MCF 10A (cell line): ENCODE measurements at regions of chr15 and their contacts with region 1.

Region 1: DNA sequence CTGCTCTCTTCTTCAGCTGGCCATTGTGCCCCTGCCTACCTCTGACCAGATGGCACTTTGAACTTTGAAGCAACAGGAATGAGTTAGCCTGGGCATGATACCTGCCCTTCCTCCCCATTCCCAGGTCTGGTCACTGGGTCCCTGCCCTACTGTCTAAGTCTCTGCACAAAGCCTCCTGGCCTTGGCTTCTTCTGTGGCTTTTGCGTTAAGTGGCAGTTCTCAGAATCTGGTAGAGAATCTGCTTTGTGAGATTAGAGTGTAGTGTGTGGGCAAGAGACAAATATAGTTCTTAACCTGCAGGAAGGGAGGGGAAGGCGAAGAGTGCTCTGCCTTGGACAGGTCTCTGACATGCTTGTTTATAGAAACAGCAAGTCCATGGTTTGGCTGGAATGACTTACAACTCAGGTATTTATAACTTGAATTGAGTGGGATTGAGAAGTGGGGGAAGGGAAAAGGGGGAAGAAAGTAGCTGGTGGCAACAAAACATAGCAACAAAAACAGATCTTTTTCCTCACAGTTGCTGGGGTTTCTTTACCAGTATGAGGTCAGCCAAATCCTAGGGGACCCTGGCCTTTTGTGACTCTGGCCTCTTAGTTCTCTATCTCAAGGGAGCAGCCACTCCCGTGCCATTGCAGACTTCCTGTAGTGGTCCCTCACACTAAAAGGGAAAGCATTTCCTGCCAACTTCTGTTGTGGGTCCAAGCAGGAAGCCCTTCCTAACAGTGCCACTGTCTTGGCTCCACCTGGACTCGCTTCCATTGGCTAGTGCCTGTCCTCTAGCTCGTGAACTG is 16.7 kb downstream of the MAPKBP1 start:
- DNase-seq: peak; percentile 58
- H3K4me3 Mint-ChIP-seq: peak overlapping the region; percentile 24
- H3K27ac Mint-ChIP-seq: peak overlapping the region; percentile 86
- H3K4me1 Mint-ChIP-seq: peaks cover 51% of the 10 kb centered on the region
- H3K27me3 Mint-ChIP-seq: no peaks in the 10 kb centered on the region
- CTCF ChIP-seq: no peak

Region 2: DNA sequence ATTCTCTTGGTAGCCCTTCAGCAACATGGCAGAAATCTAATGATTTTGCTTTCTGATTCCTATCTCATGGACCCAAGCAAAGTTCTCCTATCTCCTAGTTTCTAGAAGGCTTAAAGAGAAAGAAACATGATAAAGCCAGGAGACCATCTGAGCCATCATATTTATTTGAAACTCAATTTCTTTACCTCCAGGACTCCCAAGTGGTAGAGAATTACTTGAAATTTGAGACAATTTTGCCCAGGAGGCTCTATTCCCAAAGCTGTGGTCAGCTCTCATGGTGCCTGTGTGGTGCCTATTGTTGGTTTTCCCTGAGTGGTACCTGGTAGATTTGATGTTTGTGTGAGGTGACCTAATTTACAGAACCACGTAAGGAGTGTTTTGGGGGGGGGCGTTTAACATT is 521.1 kb before region 1 on chr15:
- CTCF ChIA-PET with region 1: no interaction called
- POLR2A ChIA-PET with region 1: no interaction called
- intact Hi-C with region 1: no loop called
- DNase-seq: no peak
- H3K4me3 Mint-ChIP-seq: no peak overlapping the region
- H3K27ac Mint-ChIP-seq: no peak overlapping the region
- H3K4me1 Mint-ChIP-seq: no peaks in the 10 kb centered on the region
- H3K27me3 Mint-ChIP-seq: no peaks in the 10 kb centered on the region
- CTCF ChIP-seq: no peak

Region 3: GRCh38 chr15:41621200-41622193 is 169.5 kb before region 1 on chr15:
- CTCF ChIA-PET with region 1: no interaction called
- POLR2A ChIA-PET with region 1: no interaction called
- intact Hi-C with region 1: no loop called
- DNase-seq: peak; percentile 85
- H3K4me3 Mint-ChIP-seq: peak overlapping the region; percentile 82
- H3K27ac Mint-ChIP-seq: peak overlapping the region; percentile 97
- H3K4me1 Mint-ChIP-seq: no peaks in the 10 kb centered on the region
- H3K27me3 Mint-ChIP-seq: no peaks in the 10 kb centered on the region
- CTCF ChIP-seq: no peak

Region 4: DNA sequence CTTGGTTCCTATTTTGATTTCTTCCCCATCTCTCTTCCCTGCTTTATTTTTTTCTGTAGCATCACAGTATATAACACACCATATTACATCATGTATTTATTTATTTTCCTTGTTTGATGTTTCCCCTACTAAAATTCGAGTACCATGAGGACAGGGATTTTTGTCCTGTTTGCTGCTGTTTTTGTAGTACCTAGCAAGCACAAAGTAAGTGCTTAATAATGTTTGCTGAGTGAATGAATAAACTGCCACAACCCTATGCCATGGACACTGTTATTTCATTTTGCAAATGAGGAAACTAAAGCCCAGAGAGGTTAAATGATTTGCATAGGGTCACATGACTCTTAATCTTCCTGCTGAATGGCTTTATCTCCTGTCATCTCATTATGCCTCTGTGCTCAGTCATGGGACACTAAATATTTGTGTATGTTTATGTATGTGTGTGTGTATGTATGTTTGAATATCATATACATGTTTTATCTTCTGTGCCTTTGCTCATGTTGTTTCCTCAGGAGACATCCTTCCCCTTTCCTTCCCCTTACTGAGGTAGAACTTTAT is 156.8 kb before region 1 on chr15:
- CTCF ChIA-PET with region 1: no interaction called
- POLR2A ChIA-PET with region 1: no interaction called
- intact Hi-C with region 1: no loop called
- DNase-seq: no peak
- H3K4me3 Mint-ChIP-seq: no peak overlapping the region
- H3K27ac Mint-ChIP-seq: no peak overlapping the region
- H3K4me1 Mint-ChIP-seq: peaks cover 5% of the 10 kb centered on the region
- H3K27me3 Mint-ChIP-seq: no peaks in the 10 kb centered on the region
- CTCF ChIP-seq: no peak

Region 5: DNA sequence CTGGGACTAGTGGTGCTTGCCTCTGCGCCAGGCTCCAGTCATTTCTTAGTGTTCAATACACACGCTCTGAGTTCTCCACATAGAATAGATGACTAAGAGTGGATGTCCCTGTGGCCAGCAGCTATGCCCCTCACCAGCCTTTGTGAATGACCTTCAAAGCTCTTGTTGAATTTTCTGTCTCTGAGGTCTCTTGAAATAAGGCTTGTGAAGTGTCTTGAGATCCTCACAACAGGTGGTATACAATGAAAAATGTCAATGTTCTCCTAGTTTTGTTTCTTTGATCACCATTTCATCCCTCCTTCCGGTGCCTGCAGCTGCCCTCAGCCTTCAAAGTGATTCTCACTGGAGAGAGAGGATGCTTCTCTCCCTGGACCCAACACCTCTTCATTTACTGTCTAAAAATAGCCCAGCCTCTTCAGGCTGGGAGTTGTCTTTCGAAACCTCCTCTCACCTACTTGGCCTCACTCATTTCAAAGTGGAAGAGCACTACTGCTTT is 11.2 kb before region 1 on chr15:
- CTCF ChIA-PET with region 1: interaction called, 17 read pairs
- POLR2A ChIA-PET with region 1: interaction called, 193 read pairs
- intact Hi-C with region 1: no loop called
- DNase-seq: no peak
- H3K4me3 Mint-ChIP-seq: no peak overlapping the region
- H3K27ac Mint-ChIP-seq: peak overlapping the region; percentile 74
- H3K4me1 Mint-ChIP-seq: peaks cover 53% of the 10 kb centered on the region
- H3K27me3 Mint-ChIP-seq: no peaks in the 10 kb centered on the region
- CTCF ChIP-seq: no peak

Region 6: DNA sequence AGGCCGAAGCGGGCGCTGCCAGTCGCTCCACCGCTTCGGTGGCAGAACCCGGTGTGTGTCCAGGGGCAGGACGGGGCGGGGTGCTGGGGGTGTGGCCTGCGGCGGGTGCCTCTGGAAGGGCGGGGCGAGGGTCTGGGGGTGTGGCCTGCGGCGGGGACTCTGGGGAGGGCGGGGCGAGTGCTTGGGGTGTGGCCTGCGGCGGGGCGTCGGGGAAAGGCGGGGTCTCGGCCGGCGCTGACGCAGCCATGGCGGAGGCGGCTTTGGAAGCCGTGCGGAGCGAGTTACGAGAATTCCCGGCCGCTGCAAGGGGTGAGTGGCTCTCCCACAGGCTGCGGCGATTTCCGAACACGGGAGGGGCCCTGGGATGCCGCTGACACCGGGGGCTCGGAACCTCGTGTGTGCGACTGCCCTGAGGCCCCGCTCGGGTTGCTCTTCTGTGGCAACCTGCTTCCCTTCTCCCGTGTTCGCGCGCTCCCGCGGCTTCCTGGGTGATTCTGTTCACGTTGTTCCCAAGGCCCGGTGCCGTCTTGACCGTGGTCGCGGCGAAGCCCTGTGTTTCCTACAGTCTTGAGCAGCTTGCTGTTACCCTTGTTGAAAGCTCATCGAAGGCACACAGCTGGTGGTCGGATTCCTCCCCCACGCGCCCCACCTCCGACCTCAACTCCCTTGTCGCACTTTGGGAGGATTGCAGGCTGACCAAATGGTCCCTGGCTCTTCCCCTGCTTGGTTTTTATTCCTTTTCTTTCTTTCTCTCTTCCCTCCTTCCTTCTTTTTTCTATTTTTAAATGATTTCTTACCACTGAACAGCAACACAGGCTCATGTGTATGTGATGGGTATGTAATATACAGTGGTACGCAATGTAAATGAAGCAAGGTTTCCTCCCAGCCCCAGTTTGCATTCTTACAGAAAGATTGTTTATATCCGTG is 37.2 kb after region 1 on chr15 and contains the start of gene JMJD7:
- CTCF ChIA-PET with region 1: no interaction called
- POLR2A ChIA-PET with region 1: no interaction called
- intact Hi-C with region 1: no loop called
- DNase-seq: peak; percentile 85
- H3K4me3 Mint-ChIP-seq: peak within 1 kb of the TSS; percentile 87
- H3K27ac Mint-ChIP-seq: peak within 1 kb of the TSS; percentile 76
- H3K4me1 Mint-ChIP-seq: peaks cover 13% of the 10 kb centered on the region
- H3K27me3 Mint-ChIP-seq: no peaks in the 10 kb centered on the region
- CTCF ChIP-seq: no peak
- total RNA-seq, gene JMJD7: 9.2 and 13.3 TPM in 2 replicates